Right ventricle myocardium inferior (tissue), 1 donor: ENCODE measurements at regions of chr13 and their contacts with region 1.

Region 1: DNA sequence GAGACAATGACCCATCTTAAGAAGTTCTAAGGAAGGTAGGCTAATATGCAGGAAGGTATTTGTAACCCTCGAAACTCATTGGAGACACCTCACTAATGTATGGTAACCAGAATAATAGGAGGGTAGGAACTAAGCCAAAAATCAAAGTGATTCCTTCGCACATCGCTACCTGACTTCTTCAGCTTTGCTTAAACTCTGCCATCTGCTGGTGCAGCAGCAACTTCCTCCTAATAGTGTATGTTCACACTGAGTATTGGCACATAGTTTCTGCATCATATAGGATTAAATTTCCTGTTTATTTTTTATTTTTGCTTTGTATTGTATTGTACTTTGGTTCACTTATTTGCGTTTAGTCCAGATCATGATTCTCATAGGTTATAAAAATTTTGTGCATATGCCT is 676.2 kb downstream of the GPC5 start:
- DNase-seq: no peak
- ATAC-seq: no peak

Region 2: DNA sequence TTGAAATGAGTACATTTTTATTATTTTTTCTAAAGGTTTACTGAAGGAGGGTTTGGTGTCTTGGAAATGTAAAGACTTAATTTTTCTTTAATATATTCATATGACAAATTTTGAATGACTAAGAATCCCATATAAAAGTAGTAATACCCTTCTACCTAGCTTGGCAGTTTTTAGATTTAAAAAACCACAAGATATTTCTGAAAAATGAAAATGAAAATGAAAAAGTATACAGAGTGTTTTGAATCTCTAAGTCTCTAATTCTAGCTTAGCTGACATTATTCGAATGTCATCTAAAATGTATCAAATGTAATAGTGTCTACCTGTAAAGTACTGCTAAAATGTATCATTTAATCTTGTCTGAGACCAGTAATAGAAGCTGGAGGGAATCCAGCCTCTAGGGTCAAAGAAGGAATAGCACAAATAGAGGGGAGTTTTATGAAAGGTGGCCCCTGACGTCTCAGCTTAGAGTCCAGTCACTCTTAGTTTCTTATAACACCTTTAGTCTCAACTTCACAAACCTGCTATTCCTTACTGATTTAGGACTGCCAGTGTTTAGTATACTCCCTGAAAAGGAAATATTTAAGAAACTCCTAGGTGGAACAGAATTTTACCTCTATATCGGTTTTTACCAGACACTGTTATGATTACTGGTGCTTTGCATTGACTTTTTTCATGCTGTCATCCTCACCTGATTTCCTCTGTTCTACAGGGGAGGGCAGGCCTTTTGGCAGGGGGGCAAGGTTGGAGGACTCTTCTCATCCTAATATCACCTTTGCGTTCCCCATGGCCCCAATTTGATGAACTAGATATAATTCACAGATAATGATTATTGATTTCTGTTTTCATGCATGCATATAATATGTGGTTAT is 743.4 kb before region 1 on chr13:
- intact Hi-C with region 1: no loop called
- DNase-seq: no peak
- ATAC-seq: no peak

Region 3: DNA sequence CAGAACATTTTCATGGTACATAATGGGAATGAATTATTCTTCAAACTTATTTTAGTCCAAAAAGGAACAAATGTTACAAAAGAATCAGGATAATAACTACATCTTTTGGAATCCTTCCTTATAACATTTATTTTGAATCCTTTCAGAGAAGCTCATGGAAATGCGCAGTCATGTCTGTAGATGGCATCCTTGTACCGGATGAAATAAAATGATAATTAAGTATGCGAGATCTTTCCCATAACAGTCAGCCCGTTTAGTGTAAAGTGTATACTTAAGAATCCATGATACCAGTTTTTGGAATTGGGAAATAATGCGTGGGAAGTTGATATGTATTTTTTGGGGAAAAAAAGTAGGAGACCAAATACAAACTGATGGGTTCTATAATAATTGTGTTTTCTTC is 257.4 kb before region 1 on chr13:
- intact Hi-C with region 1: loop called (anchors 5 kb)
- DNase-seq: no peak
- ATAC-seq: no peak